Heart left ventricle (tissue), 16 donors: ENCODE measurements at regions of chr4 and their contacts with region 1.

Region 1: DNA sequence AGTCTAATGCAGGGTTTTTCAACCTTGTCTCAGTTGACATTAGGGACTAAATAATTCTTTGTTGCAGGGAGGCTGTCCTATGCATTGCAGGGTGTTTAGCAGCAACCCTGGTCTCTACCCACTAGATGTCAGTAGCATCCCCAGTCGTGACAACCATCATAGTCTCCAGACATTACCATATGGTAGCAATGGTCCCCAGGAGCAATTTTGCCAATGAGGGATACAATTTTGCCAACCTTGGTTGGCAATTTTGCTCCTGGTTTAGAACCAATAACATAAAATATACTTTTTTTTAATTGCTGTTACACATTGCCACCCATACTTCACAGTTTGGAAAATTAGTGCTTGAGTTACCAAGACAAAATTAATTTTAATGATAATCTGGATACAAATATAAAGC is 6.0 kb downstream of the EREG start:
- DNase-seq: no peak
- ATAC-seq: peak in 3 of 4 donors; percentile 54 to 74 (median 67)
- H3K4me3 ChIP-seq: no peak overlapping the region
- H3K27ac ChIP-seq: no peak overlapping the region
- H3K4me1 ChIP-seq: peaks cover 0 to 10% (median under 1%) of the 10 kb centered on the region in 12 donors
- H3K27me3 ChIP-seq: peaks cover 0 to 20% (median 7%) of the 10 kb centered on the region in 9 donors
- CTCF ChIP-seq: peak; percentile 27 to 62 (median 48)
- POLR2A ChIP-seq: no peak

Region 2: DNA sequence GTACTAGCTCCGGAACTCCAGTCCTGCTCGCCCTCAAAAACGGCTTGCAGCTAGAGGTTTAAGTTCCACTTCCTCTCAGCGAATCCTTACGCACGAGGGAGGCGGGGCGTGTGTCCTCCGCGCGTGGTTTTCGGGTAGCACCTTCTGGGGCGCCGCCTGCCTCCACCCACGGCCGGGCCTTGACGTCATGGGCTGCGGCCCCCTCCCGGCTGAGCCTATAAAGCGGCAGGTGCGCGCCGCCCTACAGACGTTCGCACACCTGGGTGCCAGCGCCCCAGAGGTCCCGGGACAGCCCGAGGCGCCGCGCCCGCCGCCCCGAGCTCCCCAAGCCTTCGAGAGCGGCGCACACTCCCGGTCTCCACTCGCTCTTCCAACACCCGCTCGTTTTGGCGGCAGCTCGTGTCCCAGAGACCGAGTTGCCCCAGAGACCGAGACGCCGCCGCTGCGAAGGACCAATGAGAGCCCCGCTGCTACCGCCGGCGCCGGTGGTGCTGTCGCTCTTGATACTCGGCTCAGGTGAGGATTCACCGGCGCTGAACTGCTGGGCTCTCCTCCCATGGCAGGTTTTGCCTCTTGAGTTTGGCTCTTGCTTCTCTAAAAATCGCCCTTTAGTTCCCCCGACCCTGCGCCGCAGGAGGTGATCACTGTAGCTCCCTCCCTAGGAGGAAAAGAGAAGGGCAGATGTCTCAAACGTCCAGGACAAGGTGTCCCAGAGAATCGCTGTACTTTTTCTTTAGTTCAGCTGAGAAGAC is 74.2 kb after region 1 on chr4 and contains the start of gene AREG:
- intact Hi-C with region 1: loop called in 5 of 10 experiments (anchors 2 to 10 kb)
- DNase-seq: peak; percentile 63 to 86 (median 81)
- ATAC-seq: peak; percentile 87 to 93 (median 88)
- H3K4me3 ChIP-seq: peak within 1 kb of the TSS; percentile 35 to 77 (median 64)
- H3K27ac ChIP-seq: peak within 1 kb of the TSS in 11 of 12 donors; percentile 21 to 87 (median 64)
- H3K4me1 ChIP-seq: peaks cover 0 to 15% (median 0%) of the 10 kb centered on the region in 12 donors
- H3K27me3 ChIP-seq: no peaks in the 10 kb centered on the region
- CTCF ChIP-seq: peak in 11 of 12 donors; percentile 22 to 57 (median 48)
- POLR2A ChIP-seq: peak in 1 of 2 donors; percentile 66
- total RNA-seq, gene AREG: 0.27 to 9.1 (median 1.9) TPM